ENCODE measurements at regions of chr17 and their contacts with region 1.

Region 1: DNA sequence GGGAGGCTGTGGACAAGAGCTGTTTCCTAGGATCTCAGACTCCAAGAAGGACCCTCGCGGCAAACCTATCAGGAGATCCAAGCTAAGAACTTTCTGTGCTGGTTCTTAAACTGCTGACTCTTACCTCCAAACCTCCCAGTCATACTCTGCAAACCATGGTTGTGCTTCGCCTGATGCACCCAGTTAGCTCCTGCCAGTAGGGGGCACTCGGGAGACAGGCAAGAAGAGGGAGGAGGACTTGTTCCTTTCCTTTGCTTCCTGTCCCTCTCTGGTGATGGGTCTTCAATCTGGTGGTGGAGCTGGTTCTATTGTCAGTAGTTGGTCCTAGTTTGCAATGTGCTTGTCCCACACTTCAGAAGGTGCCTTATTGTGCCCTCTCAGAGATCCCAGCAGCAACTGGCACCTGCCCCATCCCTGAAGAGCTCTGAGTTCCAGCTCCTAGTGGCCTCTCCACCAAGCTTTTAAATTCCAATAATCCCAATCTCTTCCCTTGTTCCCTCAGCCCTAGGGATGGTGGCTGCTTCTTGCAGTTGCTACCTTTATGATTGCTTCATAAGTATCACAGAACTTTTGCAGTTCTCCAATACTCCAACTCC is 113.5 kb upstream of the RPL38 start:
- DNase-seq: peak in 1 of 2 donors; percentile 26
- H3K4me3 ChIP-seq: no peak overlapping the region
- H3K27ac ChIP-seq: no peak overlapping the region
- H3K4me1 ChIP-seq: no peaks in the 10 kb centered on the region
- H3K27me3 ChIP-seq: peaks cover 0 to 13% of the 10 kb centered on the region in 2 donors
- CTCF ChIP-seq: peak in 1 of 2 experiments; percentile 14

Region 2: GRCh38 chr17:74219576-74220133 is 129.7 kb after region 1 on chr17:
- intact Hi-C with region 1: no loop called
- DNase-seq: no peak
- H3K4me3 ChIP-seq: no peak overlapping the region
- H3K27ac ChIP-seq: no peak overlapping the region
- H3K4me1 ChIP-seq: peaks cover 0 to 9% (median 1%) of the 10 kb centered on the region in 4 donors
- H3K27me3 ChIP-seq: no peaks in the 10 kb centered on the region
- CTCF ChIP-seq: no peak

Region 3: GRCh38 chr17:74259667-74260524 is 169.9 kb after region 1 on chr17:
- intact Hi-C with region 1: no loop called
- DNase-seq: no peak
- H3K4me3 ChIP-seq: no peak overlapping the region
- H3K27ac ChIP-seq: no peak overlapping the region
- H3K4me1 ChIP-seq: no peaks in the 10 kb centered on the region
- H3K27me3 ChIP-seq: no peaks in the 10 kb centered on the region
- CTCF ChIP-seq: no peak

Region 4: DNA sequence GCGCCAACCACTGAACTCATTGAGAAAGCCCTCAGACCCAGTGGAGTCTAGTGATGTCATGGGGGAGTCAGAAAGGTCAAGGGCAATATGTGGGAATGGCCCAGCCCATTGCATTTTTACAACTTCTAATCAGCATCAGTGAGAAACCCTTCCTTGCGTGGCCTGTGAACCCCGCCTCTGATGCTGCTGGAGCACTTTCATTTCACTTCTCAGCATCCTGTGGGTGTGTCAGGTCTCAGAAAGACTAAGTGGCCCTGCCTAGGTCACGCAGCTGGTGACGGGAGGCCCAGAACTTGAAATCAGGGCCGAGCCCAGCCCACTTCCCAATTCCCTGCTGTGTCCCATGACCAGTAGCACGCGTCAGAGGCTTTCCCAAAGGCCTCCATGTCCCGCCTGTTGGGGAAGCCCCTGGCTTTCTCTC is 190.1 kb after region 1 on chr17:
- intact Hi-C with region 1: loop called (anchors 10 kb)
- DNase-seq: no peak
- H3K4me3 ChIP-seq: no peak overlapping the region
- H3K27ac ChIP-seq: no peak overlapping the region
- H3K4me1 ChIP-seq: no peaks in the 10 kb centered on the region
- H3K27me3 ChIP-seq: peaks cover 0 to 34% of the 10 kb centered on the region in 2 donors
- CTCF ChIP-seq: no peak

Region 5: DNA sequence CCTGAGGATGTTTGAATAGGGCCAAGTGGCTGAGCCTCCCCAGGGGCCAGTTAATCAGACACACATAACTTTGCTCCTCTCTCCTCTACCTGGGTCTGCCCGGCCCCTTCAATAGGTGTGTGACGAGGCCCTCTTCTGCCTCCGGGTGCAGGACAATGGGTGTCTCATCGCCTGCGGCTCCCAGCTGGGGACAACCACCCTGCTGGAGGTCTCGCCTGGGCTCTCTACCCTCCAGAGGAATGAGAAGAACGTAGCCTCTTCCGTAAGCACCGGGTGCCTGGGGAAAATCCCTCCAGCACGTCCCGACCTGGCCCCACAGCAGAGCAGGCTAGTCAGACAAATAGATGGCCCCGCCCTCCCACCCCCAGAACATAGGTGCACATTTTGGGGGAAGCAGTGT is 219.9 kb after region 1 on chr17:
- intact Hi-C with region 1: no loop called
- DNase-seq: no peak
- H3K4me3 ChIP-seq: no peak overlapping the region
- H3K27ac ChIP-seq: no peak overlapping the region
- H3K4me1 ChIP-seq: no peaks in the 10 kb centered on the region
- H3K27me3 ChIP-seq: peaks cover 0 to 27% of the 10 kb centered on the region in 2 donors
- CTCF ChIP-seq: no peak

Measured in tibial artery (tissue), 4 donors.